ENCODE measurements at regions of chr3 and their contacts with region 1.

Region 1: DNA sequence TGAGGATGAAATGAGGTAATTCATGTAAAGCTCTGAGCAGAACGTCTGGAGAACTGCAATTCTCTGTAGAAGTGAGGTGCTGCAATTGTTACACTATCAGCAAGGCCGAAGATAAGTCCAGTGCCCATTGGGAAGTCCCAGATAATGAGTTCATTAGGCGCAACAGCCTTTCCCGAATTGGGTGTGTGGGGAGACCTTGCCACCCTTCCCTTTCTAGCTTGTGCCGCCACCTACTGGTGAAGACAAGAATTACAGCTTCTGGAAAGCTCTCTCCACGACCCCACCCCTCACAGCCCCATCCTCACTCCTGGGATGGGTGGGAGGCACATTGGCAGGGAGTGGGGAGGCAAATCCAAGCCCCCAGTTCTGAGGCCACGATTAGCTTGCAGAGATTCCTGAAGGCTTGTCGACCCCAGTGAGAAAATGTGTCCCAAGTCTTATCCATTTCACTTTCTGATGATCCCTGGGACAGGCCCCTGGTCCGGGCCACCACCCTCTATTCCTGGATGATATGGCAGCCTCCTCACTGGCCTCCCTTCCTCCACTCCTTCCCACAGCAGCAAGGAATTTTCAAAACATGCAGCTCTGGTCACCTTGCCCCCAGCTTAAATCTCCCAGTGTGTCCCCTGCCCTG is 36.4 kb downstream of the FAM3D start:
- DNase-seq: peak; percentile 62
- H3K4me3 ChIP-seq: no peak overlapping the region
- H3K27ac ChIP-seq: peak overlapping the region; percentile 74
- H3K4me1 ChIP-seq: peaks cover 32% of the 10 kb centered on the region
- H3K27me3 ChIP-seq: no peaks in the 10 kb centered on the region
- CTCF ChIP-seq: peak; percentile 88 to 89
- POLR2A ChIP-seq: no peak

Region 2: DNA sequence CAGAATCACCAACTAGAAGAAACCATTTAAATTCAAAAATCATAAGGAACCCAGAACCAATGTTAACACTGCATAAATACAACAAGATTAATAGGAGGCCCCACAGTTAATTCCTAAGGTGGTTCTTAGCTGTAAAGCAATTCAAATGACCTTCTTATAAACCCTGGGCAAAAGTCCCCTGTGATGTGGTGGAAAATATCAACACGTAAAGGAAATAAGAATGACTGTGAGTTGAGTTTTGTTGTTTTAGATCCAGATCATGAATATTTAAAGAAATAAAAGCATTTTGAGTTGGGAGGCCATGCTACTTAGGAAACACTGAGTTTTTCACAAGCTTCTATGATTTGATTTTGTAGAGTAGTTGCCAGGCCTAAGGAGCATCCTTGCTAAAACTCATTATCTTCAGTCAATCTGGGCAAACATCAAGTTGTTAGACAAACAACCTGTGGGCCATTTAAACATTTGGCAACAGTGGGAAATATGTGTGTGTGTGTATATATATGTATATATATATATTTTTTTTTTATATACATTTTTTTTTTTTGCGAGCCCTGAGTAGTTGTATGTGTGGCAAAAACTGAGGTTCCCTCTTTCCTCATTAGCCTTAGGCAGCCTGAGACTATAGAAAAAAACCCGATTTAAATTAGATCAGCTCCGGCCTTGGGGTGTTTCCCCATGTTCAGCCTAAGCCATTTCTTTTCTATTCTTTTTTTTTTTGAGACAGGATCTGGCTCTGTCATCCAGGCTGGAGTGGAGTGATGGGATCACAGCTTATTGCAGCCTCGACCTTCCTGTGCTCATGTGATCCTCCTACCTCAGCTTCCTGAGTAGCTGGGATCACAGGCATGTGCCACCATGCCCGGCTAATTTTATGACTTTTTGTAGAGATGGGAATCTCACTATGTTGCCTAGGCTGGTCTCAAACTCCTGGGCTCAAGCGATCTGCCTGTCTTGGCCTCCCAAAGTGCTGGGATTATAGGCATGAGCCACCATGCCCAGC is 305.5 kb before region 1 on chr3:
- CTCF ChIA-PET with region 1: interaction called, 3 read pairs
- POLR2A ChIA-PET with region 1: no interaction called
- dilution Hi-C with region 1: no loop called
- intact Hi-C with region 1: loop called (anchors 2 kb)
- DNase-seq: peak; percentile 89
- H3K4me3 ChIP-seq: no peak overlapping the region
- H3K27ac ChIP-seq: peak overlapping the region; percentile 14
- H3K4me1 ChIP-seq: peaks cover 19% of the 10 kb centered on the region
- H3K27me3 ChIP-seq: no peaks in the 10 kb centered on the region
- CTCF ChIP-seq: no peak
- POLR2A ChIP-seq: no peak

Region 3: GRCh38 chr3:58526515-58526957 is 103.7 kb before region 1 on chr3:
- CTCF ChIA-PET with region 1: interaction called, 10 read pairs
- POLR2A ChIA-PET with region 1: no interaction called
- dilution Hi-C with region 1: no loop called
- intact Hi-C with region 1: no loop called
- DNase-seq: peak; percentile 58
- H3K4me3 ChIP-seq: no peak overlapping the region
- H3K27ac ChIP-seq: no peak overlapping the region
- H3K4me1 ChIP-seq: peaks cover 18% of the 10 kb centered on the region
- H3K27me3 ChIP-seq: no peaks in the 10 kb centered on the region
- CTCF ChIP-seq: no peak
- POLR2A ChIP-seq: no peak

Region 4: DNA sequence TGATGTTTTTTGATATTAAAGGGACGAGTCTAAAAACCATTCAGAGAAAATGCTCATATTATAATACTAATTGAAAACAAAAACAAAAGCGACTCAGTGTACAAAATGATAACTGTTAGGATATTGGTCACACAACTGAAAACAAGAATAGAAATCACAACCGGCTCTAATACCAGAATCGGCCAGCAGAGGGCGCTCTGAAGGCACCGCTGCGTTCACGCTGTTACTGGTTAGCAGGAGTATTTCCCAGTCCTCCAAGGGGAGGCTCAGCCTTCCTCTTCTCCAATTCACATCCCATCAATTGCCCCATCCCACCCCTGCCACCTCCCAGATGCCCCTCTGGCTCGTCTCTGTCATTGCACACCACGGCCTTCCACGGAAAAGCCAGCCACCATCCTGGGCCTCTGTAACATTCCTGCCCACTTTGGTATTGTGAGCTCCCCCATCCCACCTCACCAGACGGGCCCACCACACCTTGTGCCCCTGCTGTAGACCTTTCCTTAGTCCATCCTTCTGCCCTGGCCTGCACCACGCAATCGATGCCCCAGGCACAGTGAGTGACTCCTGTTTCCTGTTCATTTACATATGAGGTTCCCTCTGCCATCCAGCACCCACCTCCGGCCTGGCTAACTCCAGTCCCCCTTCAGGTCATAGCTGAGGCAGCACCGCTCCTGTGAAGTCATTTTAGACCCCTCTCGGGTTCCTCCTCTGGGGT is 61.5 kb before region 1 on chr3:
- CTCF ChIA-PET with region 1: interaction called, 442 read pairs
- POLR2A ChIA-PET with region 1: no interaction called
- dilution Hi-C with region 1: no loop called
- intact Hi-C with region 1: loop called (anchors 1 kb)
- DNase-seq: peak; percentile 83
- H3K4me3 ChIP-seq: no peak overlapping the region
- H3K27ac ChIP-seq: no peak overlapping the region
- H3K4me1 ChIP-seq: peaks cover 24% of the 10 kb centered on the region
- H3K27me3 ChIP-seq: no peaks in the 10 kb centered on the region
- CTCF ChIP-seq: peak; percentile 84 to 88
- POLR2A ChIP-seq: no peak

Region 5: GRCh38 chr3:58585005-58585786 is 45.0 kb before region 1 on chr3:
- CTCF ChIA-PET with region 1: interaction called, 28 read pairs
- POLR2A ChIA-PET with region 1: no interaction called
- dilution Hi-C with region 1: no loop called
- intact Hi-C with region 1: no loop called
- DNase-seq: peak; percentile 67
- H3K4me3 ChIP-seq: peak overlapping the region; percentile 40 to 65 (median 51)
- H3K27ac ChIP-seq: no peak overlapping the region
- H3K4me1 ChIP-seq: peaks cover 5% of the 10 kb centered on the region
- H3K27me3 ChIP-seq: peaks cover 20 to 26% of the 10 kb centered on the region in 2 experiments
- CTCF ChIP-seq: peak; percentile 74 to 87
- POLR2A ChIP-seq: no peak

Region 6: DNA sequence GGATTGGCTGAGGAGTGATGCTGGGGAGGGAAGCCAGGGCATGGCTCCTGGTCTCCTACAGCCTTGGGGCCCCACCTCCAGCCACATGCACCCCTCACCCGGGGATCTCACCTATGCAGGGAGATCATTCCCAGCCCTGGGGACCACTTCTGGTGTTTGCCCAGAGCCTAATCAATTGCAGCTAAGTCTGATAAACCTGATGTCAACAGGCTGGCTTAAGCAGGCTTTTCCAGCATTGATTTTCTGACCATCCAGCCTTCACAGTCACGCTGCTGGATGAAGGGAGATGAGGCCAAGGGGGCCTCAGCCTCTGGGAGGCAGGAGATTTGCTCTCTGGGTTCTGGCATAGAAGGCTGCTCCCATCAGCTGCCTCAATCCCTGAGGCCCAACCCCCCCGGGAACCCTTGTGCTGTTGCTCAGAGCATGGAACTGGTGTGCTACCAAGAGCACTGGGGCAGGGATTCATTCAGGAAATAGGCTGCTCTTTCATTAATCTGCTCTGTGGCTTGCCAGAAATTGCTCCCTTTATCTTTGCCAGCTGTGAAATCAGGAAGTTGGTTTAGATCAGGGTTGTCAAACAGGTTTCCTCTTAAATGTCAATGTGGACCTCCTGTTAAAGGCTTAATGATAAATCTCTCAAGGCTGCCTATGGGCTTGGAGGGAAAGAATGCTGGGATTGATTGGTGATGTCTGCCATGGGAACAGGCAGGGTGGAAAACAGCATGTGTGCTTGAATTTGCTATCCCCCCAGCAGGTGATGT is 17.4 kb after region 1 on chr3:
- CTCF ChIA-PET with region 1: interaction called, 76 read pairs
- POLR2A ChIA-PET with region 1: no interaction called
- dilution Hi-C with region 1: no loop called
- intact Hi-C with region 1: loop called (anchors 1 kb)
- DNase-seq: peak; percentile 95
- H3K4me3 ChIP-seq: no peak overlapping the region
- H3K27ac ChIP-seq: peak overlapping the region; percentile 15
- H3K4me1 ChIP-seq: peaks cover 25% of the 10 kb centered on the region
- H3K27me3 ChIP-seq: no peaks in the 10 kb centered on the region
- CTCF ChIP-seq: no peak
- POLR2A ChIP-seq: peak; percentile 67

Region 7: GRCh38 chr3:58835086-58835485 is 204.9 kb after region 1 on chr3:
- CTCF ChIA-PET with region 1: no interaction called
- POLR2A ChIA-PET with region 1: no interaction called
- dilution Hi-C with region 1: no loop called
- intact Hi-C with region 1: no loop called
- DNase-seq: no peak
- H3K4me3 ChIP-seq: no peak overlapping the region
- H3K27ac ChIP-seq: no peak overlapping the region
- H3K4me1 ChIP-seq: peaks cover 16% of the 10 kb centered on the region
- H3K27me3 ChIP-seq: no peaks in the 10 kb centered on the region
- CTCF ChIP-seq: no peak
- POLR2A ChIP-seq: no peak

Region 8: GRCh38 chr3:58988041-58988440 is 357.8 kb after region 1 on chr3:
- CTCF ChIA-PET with region 1: no interaction called
- POLR2A ChIA-PET with region 1: no interaction called
- dilution Hi-C with region 1: no loop called
- intact Hi-C with region 1: no loop called
- DNase-seq: no peak
- H3K4me3 ChIP-seq: no peak overlapping the region
- H3K27ac ChIP-seq: no peak overlapping the region
- H3K4me1 ChIP-seq: peaks cover 18% of the 10 kb centered on the region
- H3K27me3 ChIP-seq: no peaks in the 10 kb centered on the region
- CTCF ChIP-seq: no peak
- POLR2A ChIP-seq: no peak

Region 9: GRCh38 chr3:59555593-59556315 is 925.6 kb after region 1 on chr3:
- CTCF ChIA-PET with region 1: no interaction called
- POLR2A ChIA-PET with region 1: no interaction called
- dilution Hi-C with region 1: no loop called
- intact Hi-C with region 1: no loop called
- DNase-seq: no peak
- H3K4me3 ChIP-seq: no peak overlapping the region
- H3K27ac ChIP-seq: no peak overlapping the region
- H3K4me1 ChIP-seq: no peaks in the 10 kb centered on the region
- H3K27me3 ChIP-seq: no peaks in the 10 kb centered on the region
- CTCF ChIP-seq: no peak
- POLR2A ChIP-seq: no peak

Measured in endothelial cell of umbilical vein (primary cell).